Vagina (tissue), 2 donors: ENCODE measurements at regions of chr1 and their contacts with region 1.

Region 1: GRCh38 chr1:167533851-167534300 is 15.5 kb upstream of the CD247 start:
- DNase-seq: peak in 1 of 2 donors; percentile 86
- H3K4me3 ChIP-seq: no peak overlapping the region
- H3K27ac ChIP-seq: no peak overlapping the region
- H3K4me1 ChIP-seq: no peaks in the 10 kb centered on the region
- H3K27me3 ChIP-seq: no peaks in the 10 kb centered on the region
- CTCF ChIP-seq: peak; percentile 61 to 79 (median 72)
- POLR2A ChIP-seq: no peak

Region 2: GRCh38 chr1:167066333-167067122 is 467.3 kb before region 1 on chr1:
- intact Hi-C with region 1: loop called (anchors 5 kb)
- DNase-seq: no peak
- H3K4me3 ChIP-seq: no peak overlapping the region
- H3K27ac ChIP-seq: no peak overlapping the region
- H3K4me1 ChIP-seq: peaks cover 7% of the 10 kb centered on the region
- H3K27me3 ChIP-seq: no peaks in the 10 kb centered on the region
- CTCF ChIP-seq: peak; percentile 79 to 96 (median 90)
- POLR2A ChIP-seq: no peak